ENCODE measurements at regions of chr15 and their contacts with region 1.

Region 1: DNA sequence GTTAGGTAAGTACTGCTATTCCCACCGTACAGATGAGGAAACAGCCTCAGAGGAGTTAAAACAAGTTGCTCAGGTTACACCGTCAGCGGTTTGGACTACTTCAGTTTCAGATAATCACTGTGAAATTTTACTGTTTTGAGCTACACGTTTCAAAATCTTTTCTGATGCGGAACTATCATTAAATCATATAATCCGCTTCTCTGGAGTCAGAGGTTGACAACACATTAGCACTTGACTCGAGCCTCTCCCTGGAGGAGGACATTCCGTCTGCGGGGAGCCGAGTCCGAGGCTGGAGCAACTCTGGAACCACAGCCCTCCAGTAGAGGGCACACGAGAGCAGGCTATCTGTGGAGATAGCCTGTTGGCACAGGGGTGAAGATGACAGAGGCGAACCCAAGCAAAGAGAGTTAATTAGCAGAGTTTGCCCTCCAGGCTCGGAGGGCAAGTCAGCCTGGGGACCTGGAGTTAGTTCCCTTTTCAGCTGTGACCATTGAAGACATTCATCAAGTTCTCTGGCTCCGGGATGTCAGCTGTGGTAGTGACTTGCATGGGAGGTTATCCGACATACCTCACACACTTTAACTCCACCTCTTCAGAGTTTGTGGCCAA is 131.2 kb downstream of the IGF1R start:
- DNase-seq: peak; percentile 82
- H3K4me3 Mint-ChIP-seq: peak overlapping the region; percentile 21
- H3K27ac Mint-ChIP-seq: no peak overlapping the region
- H3K4me1 Mint-ChIP-seq: peaks cover 20% of the 10 kb centered on the region
- H3K27me3 Mint-ChIP-seq: peaks cover 2% of the 10 kb centered on the region

Region 2: GRCh38 chr15:98668566-98669308 is 110.8 kb before region 1 on chr15:
- CTCF ChIA-PET with region 1: interaction called, 5 read pairs
- POLR2A ChIA-PET with region 1: no interaction called
- intact Hi-C with region 1: loop called (anchors 5 kb)
- DNase-seq: peak; percentile 77
- H3K4me3 Mint-ChIP-seq: no peak overlapping the region
- H3K27ac Mint-ChIP-seq: peak overlapping the region; percentile 36
- H3K4me1 Mint-ChIP-seq: peaks cover 39% of the 10 kb centered on the region
- H3K27me3 Mint-ChIP-seq: no peaks in the 10 kb centered on the region

Region 3: DNA sequence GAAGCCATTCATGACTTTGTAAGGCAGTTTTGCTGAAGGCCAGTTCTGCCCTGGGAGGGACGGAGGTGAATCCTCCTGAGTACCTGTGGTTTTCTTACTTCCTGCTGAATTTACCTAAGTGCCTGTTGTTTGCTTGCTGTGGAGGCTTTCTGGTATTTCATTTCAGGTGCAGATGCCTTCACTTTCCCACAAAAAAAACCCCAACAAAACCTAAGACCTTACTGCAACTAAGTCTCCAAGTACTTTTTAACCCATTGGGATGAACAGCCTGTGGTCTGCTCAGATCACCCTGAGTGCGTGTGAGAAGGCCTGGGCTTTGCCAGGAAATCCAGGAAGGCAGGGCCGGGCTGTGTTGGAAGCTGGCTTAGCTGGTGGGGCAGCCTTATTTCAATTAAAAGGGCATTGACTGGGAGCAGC is 66.0 kb before region 1 on chr15:
- CTCF ChIA-PET with region 1: no interaction called
- POLR2A ChIA-PET with region 1: no interaction called
- intact Hi-C with region 1: loop called (anchors 10 kb)
- DNase-seq: peak; percentile 16
- H3K4me3 Mint-ChIP-seq: no peak overlapping the region
- H3K27ac Mint-ChIP-seq: no peak overlapping the region
- H3K4me1 Mint-ChIP-seq: peaks cover 35% of the 10 kb centered on the region
- H3K27me3 Mint-ChIP-seq: no peaks in the 10 kb centered on the region

Region 4: GRCh38 chr15:99059010-99059981 is 279.7 kb after region 1 on chr15:
- CTCF ChIA-PET with region 1: interaction called, 7 read pairs
- POLR2A ChIA-PET with region 1: no interaction called
- intact Hi-C with region 1: loop called (anchors 5 kb)
- DNase-seq: peak; percentile 54
- H3K4me3 Mint-ChIP-seq: peak overlapping the region; percentile 49
- H3K27ac Mint-ChIP-seq: no peak overlapping the region
- H3K4me1 Mint-ChIP-seq: peaks cover 4% of the 10 kb centered on the region
- H3K27me3 Mint-ChIP-seq: peaks cover 35% of the 10 kb centered on the region